GM10248 (cell line): ENCODE measurements at regions of chr12 and their contacts with region 1.

Region 1: DNA sequence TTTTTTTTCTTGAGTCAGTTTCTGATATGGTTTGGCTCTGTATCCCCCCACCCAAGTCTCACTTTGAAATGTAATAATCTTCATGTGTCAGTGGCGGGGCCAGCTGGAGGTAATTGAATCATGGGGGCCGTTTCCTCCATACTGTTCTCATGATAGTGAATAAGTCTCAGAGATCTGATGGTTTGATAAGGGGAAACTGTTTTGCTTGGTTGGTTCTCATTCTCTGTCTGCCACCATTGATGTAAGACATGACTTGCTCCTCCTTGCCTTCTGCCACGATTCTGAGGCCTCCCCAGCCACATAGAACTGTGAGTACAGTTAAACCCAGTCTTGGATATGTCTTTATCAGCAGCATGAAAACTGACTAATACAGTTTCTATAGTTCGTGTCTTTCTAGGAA is 42.9 kb downstream of the WNK1 start:
- DNase-seq: no peak
- CTCF ChIP-seq: no peak

Region 2: GRCh38 chr12:779745-780734 is 15.3 kb before region 1 on chr12:
- CTCF ChIA-PET with region 1: interaction called, 13 read pairs
- POLR2A ChIA-PET with region 1: no interaction called
- DNase-seq: no peak
- CTCF ChIP-seq: no peak